HCT116 (cell line): ENCODE measurements at regions of chr13 and their contacts with region 1.

Region 1: GRCh38 chr13:60175571-60175970 is 11.8 kb upstream of the DIAPH3 start:
- DNase-seq: no peak
- ATAC-seq: no peak
- H3K4me3 ChIP-seq: no peak overlapping the region
- H3K27ac ChIP-seq: no peak overlapping the region
- H3K4me1 ChIP-seq: no peaks in the 10 kb centered on the region
- H3K27me3 ChIP-seq: no peaks in the 10 kb centered on the region
- CTCF ChIP-seq: no peak
- POLR2A ChIP-seq: no peak
- RAD21 ChIP-seq: no peak

Region 2: DNA sequence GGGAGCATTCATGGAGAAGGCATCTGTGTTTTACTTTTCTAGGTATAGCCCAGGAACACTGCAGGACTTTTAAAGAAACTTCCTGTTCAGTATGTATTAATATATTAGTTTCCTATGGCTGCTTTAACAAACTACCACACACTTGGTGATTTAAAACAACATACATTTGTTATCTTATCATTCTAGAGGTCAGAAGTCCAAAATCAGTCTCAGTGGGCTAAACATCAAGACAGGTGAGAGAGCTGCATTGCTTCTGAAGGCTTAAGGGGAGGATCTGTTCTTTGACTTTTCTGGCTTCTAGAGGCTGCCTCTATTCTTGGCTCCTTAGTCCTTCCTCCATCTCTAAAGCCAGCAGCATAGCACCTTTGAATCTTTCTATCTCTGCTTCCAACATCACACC is 25.7 kb after region 1 on chr13:
- CTCF ChIA-PET with region 1: no interaction called
- POLR2A ChIA-PET with region 1: no interaction called
- RAD21 ChIA-PET with region 1: no interaction called
- intact Hi-C with region 1: loop called (anchors 2 kb)
- DNase-seq: no peak
- ATAC-seq: no peak
- H3K4me3 ChIP-seq: no peak overlapping the region
- H3K27ac ChIP-seq: no peak overlapping the region
- H3K4me1 ChIP-seq: no peaks in the 10 kb centered on the region
- H3K27me3 ChIP-seq: no peaks in the 10 kb centered on the region
- CTCF ChIP-seq: no peak
- POLR2A ChIP-seq: no peak
- RAD21 ChIP-seq: no peak

Region 3: DNA sequence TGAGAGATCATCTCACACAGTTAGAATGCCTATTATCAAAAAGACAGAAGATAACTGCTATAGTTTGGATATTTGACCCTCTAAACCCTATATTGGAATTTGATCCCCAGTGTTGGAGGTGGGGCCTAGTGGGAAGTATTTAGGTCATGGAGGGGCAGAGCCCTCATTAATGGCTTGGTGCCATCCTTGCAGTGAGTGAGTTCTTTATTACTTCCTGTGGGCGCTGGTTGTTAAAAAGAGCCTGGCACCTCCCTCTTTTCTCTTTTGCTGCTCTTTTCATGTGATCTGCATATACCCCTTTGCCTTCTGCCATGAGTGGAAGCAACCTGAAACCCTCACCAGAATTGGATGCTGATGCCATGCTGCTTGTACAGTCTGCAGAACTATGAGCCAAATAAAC is 288.2 kb after region 1 on chr13:
- CTCF ChIA-PET with region 1: no interaction called
- POLR2A ChIA-PET with region 1: no interaction called
- RAD21 ChIA-PET with region 1: no interaction called
- intact Hi-C with region 1: no loop called
- DNase-seq: no peak
- ATAC-seq: no peak
- H3K4me3 ChIP-seq: no peak overlapping the region
- H3K27ac ChIP-seq: no peak overlapping the region
- H3K4me1 ChIP-seq: no peaks in the 10 kb centered on the region
- H3K27me3 ChIP-seq: no peaks in the 10 kb centered on the region
- CTCF ChIP-seq: no peak
- POLR2A ChIP-seq: no peak
- RAD21 ChIP-seq: no peak